ENCODE measurements at regions of chr22 and their contacts with region 1.

Region 1: GRCh38 chr22:46803031-46803880 is 40.8 kb downstream of the TBC1D22A start:
- DNase-seq: peak; percentile 38 to 90 (median 67)
- ATAC-seq: peak; percentile 75 to 83 (median 81)
- H3K4me3 ChIP-seq: no peak overlapping the region
- H3K4me3 Mint-ChIP-seq: peak overlapping the region in 1 of 3 donors; percentile 31
- H3K27ac ChIP-seq: peak overlapping the region; percentile 36
- H3K27ac Mint-ChIP-seq: peak overlapping the region; percentile 41 to 77
- H3K4me1 ChIP-seq: peaks cover 4 to 21% of the 10 kb centered on the region in 2 experiments
- H3K4me1 Mint-ChIP-seq: peaks cover 51 to 59% (median 56%) of the 10 kb centered on the region in 3 donors
- H3K27me3 ChIP-seq: no peaks in the 10 kb centered on the region
- H3K27me3 Mint-ChIP-seq: no peaks in the 10 kb centered on the region

Region 2: DNA sequence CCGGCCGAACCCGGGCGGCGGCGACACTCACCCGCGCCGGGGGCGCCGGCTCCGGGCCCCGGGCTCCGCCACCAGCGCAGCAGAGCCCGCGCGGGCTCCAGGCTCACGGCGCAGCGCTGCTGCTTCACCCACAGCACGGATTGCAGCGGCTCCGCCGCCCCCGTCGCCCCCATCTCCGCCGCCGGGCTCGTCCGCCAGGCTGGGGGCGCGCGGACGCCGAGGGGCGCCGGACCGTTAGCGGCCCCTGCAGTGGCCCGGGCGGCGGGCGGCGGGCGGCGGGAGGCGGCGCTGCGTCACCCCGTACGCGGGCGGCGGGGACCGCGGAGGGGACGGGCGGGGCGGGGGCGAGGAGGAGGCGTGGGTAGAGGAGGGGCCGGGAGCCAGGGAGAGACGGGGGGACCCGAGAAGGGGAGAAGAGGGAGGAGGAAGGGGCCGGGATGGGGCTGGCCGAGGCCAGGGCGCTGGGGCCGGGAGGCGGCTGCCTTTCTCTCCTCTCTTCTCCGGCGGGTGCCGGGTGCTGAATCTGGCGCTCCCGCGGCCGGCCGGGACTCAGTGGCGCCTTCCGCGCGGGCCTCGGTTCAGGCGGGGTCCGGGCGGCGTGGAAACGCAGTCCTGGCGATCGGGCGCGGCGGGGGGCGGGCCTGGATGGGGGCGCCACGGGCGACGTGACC is 65.1 kb before region 1 on chr22 and contains the start of gene CERK:
- CTCF ChIA-PET with region 1: interaction called, 3 to 35 read pairs
- POLR2A ChIA-PET with region 1: no interaction called
- DNase-seq: peak in 34 of 35 experiments; percentile 38 to 81 (median 57)
- ATAC-seq: peak; percentile 57 to 76 (median 68)
- H3K4me3 ChIP-seq: peak within 1 kb of the TSS; percentile 62 to 84
- H3K4me3 Mint-ChIP-seq: peak within 1 kb of the TSS; percentile 95 to 100 (median 100)
- H3K27ac ChIP-seq: peak within 1 kb of the TSS; percentile 84
- H3K27ac Mint-ChIP-seq: peak within 1 kb of the TSS; percentile 100
- H3K4me1 ChIP-seq: peaks cover 28 to 62% of the 10 kb centered on the region in 2 experiments
- H3K4me1 Mint-ChIP-seq: peaks cover 43 to 48% (median 45%) of the 10 kb centered on the region in 3 donors
- H3K27me3 ChIP-seq: no peaks in the 10 kb centered on the region
- H3K27me3 Mint-ChIP-seq: no peaks in the 10 kb centered on the region
- total RNA-seq, gene CERK: 77.4 to 155 (median 125) TPM

Region 3: GRCh38 chr22:46758867-46759290 is 44.4 kb before region 1 on chr22:
- CTCF ChIA-PET with region 1: interaction called, 4 to 18 read pairs
- POLR2A ChIA-PET with region 1: interaction called, 3 to 4 read pairs
- DNase-seq: peak in 16 of 35 experiments; percentile 25 to 73 (median 39)
- ATAC-seq: no peak
- H3K4me3 ChIP-seq: no peak overlapping the region
- H3K4me3 Mint-ChIP-seq: no peak overlapping the region
- H3K27ac ChIP-seq: no peak overlapping the region
- H3K27ac Mint-ChIP-seq: peak overlapping the region; percentile 24 to 63
- H3K4me1 ChIP-seq: peaks cover 8 to 37% of the 10 kb centered on the region in 2 experiments
- H3K4me1 Mint-ChIP-seq: peaks cover 36 to 60% (median 47%) of the 10 kb centered on the region in 3 donors
- H3K27me3 ChIP-seq: no peaks in the 10 kb centered on the region
- H3K27me3 Mint-ChIP-seq: no peaks in the 10 kb centered on the region

Region 4: DNA sequence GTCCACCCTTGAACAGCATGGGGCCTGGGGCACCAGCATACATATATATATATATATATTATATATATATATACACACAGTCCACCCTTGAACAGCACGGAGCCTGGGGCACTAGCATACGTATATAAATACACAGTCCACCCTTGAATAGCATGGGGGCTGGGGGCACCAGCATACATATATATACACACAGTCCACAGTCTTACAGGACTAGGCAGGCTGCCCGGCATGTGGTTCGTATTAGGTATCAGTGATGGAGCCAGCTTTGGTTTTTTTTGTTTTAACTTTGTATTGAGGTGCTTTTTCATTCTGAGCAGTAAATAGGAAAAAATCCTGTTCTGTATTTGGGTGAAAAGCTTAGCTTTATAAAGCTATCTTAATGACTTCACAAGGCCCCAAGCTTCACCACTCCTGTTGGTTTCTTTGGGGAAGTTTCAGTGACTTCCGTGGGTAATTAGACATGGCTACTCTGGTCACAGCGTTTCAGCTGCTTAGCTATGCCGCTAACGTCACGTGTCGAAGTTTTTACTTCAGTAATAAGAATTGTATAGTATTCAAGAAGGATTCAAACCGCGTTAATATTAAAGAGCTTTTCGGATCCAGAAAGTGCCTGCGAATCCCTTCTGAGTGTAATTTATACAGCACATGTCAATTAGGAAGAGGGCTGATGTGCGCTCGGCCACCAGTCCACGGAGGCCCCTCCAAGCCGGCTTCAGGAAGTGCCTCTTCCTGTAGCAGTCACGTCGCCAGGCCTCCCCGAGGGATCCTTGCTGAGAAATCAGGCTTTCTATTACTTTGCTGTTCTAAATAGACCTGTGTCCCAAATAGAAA is 138.9 kb after region 1 on chr22:
- CTCF ChIA-PET with region 1: no interaction called
- POLR2A ChIA-PET with region 1: no interaction called
- DNase-seq: peak in 1 of 35 experiments; percentile 11
- ATAC-seq: no peak
- H3K4me3 ChIP-seq: no peak overlapping the region
- H3K4me3 Mint-ChIP-seq: peak overlapping the region in 1 of 3 donors; percentile 6
- H3K27ac ChIP-seq: no peak overlapping the region
- H3K27ac Mint-ChIP-seq: no peak overlapping the region
- H3K4me1 ChIP-seq: peaks cover 0 to 4% of the 10 kb centered on the region in 2 experiments
- H3K4me1 Mint-ChIP-seq: peaks cover 9 to 25% (median 14%) of the 10 kb centered on the region in 3 donors
- H3K27me3 ChIP-seq: no peaks in the 10 kb centered on the region
- H3K27me3 Mint-ChIP-seq: no peaks in the 10 kb centered on the region

Measured in T-cell (primary cell).